Dorsolateral prefrontal cortex (tissue), 120 donors: ENCODE measurements at regions of chr4 and their contacts with region 1.

Region 1: DNA sequence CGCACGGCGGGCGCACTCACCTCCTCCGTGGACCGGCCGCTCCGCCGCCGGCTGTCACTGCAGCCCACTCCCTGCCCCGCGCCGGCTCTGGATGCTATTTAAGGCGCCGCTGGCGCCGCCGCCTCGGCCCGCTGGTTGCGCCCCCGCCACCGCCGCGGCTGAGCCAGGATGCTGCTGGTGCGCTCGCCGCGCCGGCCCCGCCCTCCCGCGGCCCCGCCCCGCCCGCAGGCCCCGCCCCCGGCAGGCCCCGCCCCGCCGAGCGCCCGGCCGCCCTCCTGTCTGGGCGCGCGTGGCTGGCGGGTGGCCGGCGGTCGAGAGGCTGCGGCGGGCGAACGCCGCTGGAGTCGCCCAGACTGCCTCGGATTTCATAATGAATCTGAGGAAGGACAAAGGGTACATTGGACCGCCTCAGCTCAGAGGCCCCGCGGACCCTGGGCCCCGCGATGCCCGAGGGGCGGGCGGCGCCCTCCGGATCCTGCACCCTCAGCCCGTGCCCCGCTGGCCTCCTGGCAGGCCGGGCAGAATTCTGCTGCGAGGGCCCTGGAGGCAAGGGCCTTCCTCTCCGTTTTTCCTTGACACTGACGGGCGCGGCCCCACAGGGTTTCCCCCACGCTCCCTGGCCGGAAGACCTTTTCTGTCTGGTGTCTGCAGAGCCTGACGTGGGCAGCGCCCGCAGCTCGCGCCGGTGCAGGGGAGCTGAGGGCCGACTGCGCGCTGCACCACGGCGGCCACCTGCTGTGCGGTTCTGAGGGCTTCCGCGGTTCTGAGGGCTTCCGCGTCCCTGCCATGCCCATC is at the start of gene ACSL1:
- DNase-seq: peak; percentile 73 to 91 (median 84)
- H3K4me3 ChIP-seq: peak within 1 kb of the TSS; percentile 56 to 93 (median 77)
- H3K27ac ChIP-seq: peak within 1 kb of the TSS in 58 of 59 donors; percentile 9 to 94 (median 81)
- H3K27me3 ChIP-seq: no peaks in the 10 kb centered on the region
- CTCF ChIP-seq: peak in 4 of 56 donors; percentile 4 to 16 (median 8)
- total RNA-seq, gene ACSL1: 24.4 to 144 (median 53.4) TPM

Region 2: DNA sequence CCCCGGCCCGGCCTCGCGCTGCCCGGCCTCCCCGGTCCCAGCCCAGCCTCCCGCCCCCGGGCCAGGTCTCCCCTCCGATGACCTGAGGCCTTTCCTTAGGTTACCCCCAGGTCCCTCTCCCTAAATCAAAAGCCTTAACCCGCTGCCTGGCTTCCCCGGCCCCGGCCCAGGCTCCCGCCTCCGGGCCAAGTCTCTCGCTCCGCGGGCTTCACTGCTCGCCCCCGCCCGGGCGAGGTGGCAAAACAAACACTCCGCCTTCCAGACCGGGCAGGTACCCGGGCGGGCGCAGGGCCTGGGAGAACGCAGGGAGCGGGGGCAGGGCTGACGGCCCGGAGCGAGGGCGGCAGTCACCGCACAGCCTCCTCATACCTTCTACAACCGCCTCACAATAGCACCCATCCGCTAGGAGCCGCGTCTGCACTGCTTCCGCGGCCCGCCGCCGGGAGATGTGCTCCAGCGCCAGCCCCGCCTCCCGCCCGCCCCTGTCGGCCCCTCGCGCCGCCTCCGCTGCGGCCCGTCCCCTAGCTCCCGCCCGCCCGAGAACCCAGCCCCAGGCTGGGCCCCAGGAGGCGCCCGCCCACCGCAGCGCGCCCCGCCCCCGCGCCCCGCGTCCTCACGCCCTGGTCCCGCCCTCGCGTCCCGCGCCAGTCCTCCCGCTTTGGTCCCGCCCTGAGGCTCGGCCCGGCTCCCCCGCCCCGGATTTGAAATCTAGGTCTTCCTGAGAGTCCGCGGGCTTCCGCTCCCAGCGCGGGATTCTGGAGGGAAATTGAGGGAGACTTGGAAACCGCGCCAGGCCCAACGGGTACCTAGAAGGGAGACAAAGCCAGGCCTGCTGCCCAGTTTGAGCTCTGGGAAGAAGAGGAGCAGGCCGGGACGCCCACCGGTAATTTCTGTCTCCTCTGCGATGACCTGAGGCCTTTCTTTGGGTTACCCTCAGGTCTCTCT is 176.8 kb before region 1 on chr4 and contains the starts of genes CASP3 and PRIMPOL:
- intact Hi-C with region 1: loop called (anchors 2 to 5 kb)
- DNase-seq: peak; percentile 93 to 99 (median 96)
- H3K4me3 ChIP-seq: peak within 1 kb of the TSS; percentile 60 to 97 (median 89)
- H3K27ac ChIP-seq: peak within 1 kb of the TSS; percentile 55 to 98 (median 94)
- H3K27me3 ChIP-seq: no peaks in the 10 kb centered on the region
- CTCF ChIP-seq: peak in 51 of 56 donors; percentile 14 to 67 (median 44)
- total RNA-seq, gene CASP3: 6.4 to 17.2 (median 12.2) TPM
- total RNA-seq, gene PRIMPOL: 9.5 to 30.5 (median 17.5) TPM

Region 3: DNA sequence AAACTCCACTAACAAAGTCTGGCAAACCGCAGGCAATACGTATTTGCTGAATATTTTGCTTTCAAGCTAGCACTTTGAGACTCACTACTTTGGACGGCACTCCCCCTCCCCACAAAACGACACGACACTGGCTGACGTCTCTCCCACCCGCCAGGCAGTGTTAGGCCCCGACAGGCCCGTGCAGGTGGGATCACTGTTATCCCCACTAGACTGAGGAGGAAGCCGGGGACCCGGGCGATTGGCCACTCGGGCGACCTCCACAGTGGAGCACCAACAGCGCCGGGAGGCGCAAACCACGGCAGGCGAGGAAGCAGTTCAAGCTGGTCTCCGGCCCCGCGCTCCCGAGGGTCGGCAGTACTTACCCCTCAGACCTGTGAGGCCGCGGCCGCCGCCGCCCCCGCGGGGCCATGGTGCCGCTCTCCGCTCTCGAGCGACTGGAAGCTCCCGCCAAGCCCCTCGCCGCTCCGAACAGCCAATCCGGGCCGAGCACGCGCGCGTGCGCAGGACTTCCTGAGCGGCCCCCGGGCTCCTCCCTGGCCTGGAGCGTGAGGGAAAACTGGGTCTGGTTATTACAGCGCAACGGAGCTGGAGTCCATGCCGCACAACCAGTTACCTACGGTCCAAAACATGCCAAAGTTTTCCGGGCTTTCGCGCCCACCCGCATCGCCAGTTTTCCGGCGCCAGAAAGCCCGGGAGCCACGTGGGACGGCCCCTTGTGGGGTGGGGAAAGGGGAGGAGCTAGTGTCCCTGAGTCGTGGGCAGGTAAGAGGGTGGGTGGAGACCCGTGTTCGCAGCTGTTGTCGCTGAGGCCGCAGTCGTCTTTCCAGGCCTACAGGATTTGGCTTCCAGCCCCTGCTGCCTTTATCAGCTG is 92.2 kb before region 1 on chr4 and contains the start of gene CENPU:
- intact Hi-C with region 1: loop called (anchors 5 kb)
- DNase-seq: peak; percentile 91 to 97 (median 96)
- H3K4me3 ChIP-seq: peak within 1 kb of the TSS; percentile 49 to 100 (median 84)
- H3K27ac ChIP-seq: peak within 1 kb of the TSS in 45 of 59 donors; percentile 4 to 84 (median 66)
- H3K27me3 ChIP-seq: no peaks in the 10 kb centered on the region
- CTCF ChIP-seq: peak in 27 of 56 donors; percentile 9 to 54 (median 30)
- total RNA-seq, gene CENPU: 0.33 to 3.8 (median 1.1) TPM in 106 of 120 experiments, not detected in the others

Region 4: DNA sequence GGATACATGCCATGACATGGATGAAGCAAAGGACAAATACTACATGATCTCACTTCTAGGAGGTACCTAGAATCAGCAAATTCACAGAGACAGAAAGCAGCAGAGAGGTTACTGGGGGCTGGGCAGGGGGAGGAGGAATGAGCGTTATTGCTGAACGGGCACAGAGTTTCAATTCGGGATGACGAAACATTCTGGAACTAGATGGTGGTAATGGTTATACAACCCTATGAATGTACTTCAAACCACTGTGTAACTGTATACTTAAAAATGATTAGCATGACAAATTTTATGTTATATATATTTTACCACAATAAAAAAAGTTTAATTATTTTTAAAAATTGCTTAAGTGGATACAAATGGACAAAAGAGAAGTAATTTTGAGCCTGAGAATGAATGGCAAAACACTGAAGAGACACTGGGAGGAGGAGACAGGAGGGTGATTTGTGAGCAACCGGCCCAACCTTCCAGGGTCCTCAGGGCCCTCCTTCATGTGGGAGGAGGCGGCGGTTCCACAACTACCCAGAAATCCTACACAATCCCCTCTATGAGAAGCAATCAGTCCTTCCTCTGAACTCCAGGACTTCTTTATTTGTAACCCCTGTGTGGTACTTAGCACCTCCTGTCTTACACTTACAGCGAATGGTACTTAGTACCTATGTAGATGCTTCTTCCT is 14.4 kb before region 1 on chr4:
- intact Hi-C with region 1: loop called in 1 of 2 experiments (anchors 2 kb)
- DNase-seq: no peak
- H3K4me3 ChIP-seq: peak overlapping the region in 1 of 59 donors; percentile 13
- H3K27ac ChIP-seq: peak overlapping the region in 44 of 59 donors; percentile 7 to 97 (median 80)
- H3K27me3 ChIP-seq: no peaks in the 10 kb centered on the region
- CTCF ChIP-seq: no peak